Dorsolateral prefrontal cortex (tissue), 120 donors: ENCODE measurements at regions of chr4 and their contacts with region 1.

Region 1: DNA sequence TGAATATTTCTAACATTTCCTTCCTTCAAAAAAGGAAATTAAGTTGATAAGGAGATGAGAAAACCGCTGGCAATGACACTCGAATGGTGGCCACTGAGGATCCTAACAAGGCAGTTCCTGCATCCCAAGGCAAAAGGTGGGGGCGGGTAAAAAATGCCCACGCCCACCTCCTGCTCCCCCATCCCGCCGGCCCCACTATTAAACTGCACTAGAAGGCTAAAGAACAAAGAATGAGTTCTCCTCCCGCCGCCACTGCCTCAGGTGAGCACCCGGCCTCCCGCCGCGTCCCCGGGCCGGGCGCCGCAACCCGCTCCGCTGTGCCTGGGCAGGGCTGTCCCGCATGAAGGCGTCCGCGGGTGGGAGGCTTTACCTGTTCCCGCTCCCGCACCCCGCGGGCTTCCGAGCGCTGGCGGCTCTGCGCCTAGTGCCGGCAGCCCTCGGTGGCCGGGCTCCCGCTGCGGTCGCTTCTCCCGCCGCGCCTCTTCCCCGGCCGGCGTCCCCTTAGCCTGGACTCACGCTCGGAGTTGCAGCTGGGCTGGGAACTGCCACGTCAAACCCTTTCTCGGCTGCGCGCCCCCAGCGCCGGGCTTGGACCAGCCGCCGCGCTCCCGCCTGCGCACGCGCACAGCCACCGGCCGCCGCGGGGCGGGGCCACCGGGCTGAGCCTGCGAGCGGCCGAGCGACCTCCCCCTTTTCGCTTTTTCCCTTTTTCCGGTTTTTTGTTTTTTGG is at the start of gene SEC24D:
- DNase-seq: peak; percentile 65 to 93 (median 80)
- H3K4me3 ChIP-seq: peak within 1 kb of the TSS; percentile 69 to 99 (median 92)
- H3K27ac ChIP-seq: peak within 1 kb of the TSS; percentile 28 to 97 (median 81)
- H3K27me3 ChIP-seq: no peaks in the 10 kb centered on the region
- CTCF ChIP-seq: peak in 29 of 56 donors; percentile 6 to 60 (median 28)
- total RNA-seq, gene SEC24D: 12.7 to 44.7 (median 24.8) TPM

Region 2: GRCh38 chr4:118684873-118685811 is 150.6 kb before region 1 on chr4 and contains the start of gene METTL14:
- intact Hi-C with region 1: loop called in 1 of 2 experiments (anchors 5 kb)
- DNase-seq: peak; percentile 89 to 95 (median 94)
- H3K4me3 ChIP-seq: peak within 1 kb of the TSS; percentile 66 to 97 (median 84)
- H3K27ac ChIP-seq: peak within 1 kb of the TSS; percentile 1 to 96 (median 87)
- H3K27me3 ChIP-seq: no peaks in the 10 kb centered on the region
- CTCF ChIP-seq: peak in 44 of 56 donors; percentile 11 to 64 (median 36)
- total RNA-seq, gene METTL14: 30.2 to 66.1 (median 44.3) TPM

Region 3: GRCh38 chr4:118888666-118889311 is 53.1 kb after region 1 on chr4 and contains the start of gene SYNPO2:
- intact Hi-C with region 1: loop called in 1 of 2 experiments (anchors 5 kb)
- DNase-seq: peak; percentile 35 to 78 (median 71)
- H3K4me3 ChIP-seq: peak within 1 kb of the TSS; percentile 36 to 77 (median 60)
- H3K27ac ChIP-seq: peak within 1 kb of the TSS in 53 of 59 donors; percentile 8 to 88 (median 66)
- H3K27me3 ChIP-seq: no peaks in the 10 kb centered on the region
- CTCF ChIP-seq: peak in 4 of 56 donors; percentile 11 to 25 (median 14)
- total RNA-seq, gene SYNPO2: 19.6 to 90.2 (median 34.3) TPM